ENCODE measurements at regions of chr7 and their contacts with region 1.

Region 1: GRCh38 chr7:55515569-55516279 is 56.6 kb downstream of the VOPP1 start:
- DNase-seq: peak; percentile 53
- H3K4me3 Mint-ChIP-seq: peak overlapping the region; percentile 18
- H3K27ac Mint-ChIP-seq: peak overlapping the region; percentile 74
- H3K4me1 Mint-ChIP-seq: peaks cover 82% of the 10 kb centered on the region
- H3K27me3 Mint-ChIP-seq: no peaks in the 10 kb centered on the region

Region 2: GRCh38 chr7:55309040-55309991 is 206.4 kb before region 1 on chr7:
- CTCF ChIA-PET with region 1: interaction called, 3 read pairs
- POLR2A ChIA-PET with region 1: interaction called, 8 read pairs
- intact Hi-C with region 1: loop called (anchors 1 kb)
- DNase-seq: peak; percentile 95
- H3K4me3 Mint-ChIP-seq: peak overlapping the region; percentile 16
- H3K27ac Mint-ChIP-seq: peak overlapping the region; percentile 90
- H3K4me1 Mint-ChIP-seq: peaks cover 43% of the 10 kb centered on the region
- H3K27me3 Mint-ChIP-seq: peaks cover 25% of the 10 kb centered on the region

Region 3: GRCh38 chr7:55432939-55433784 is 82.6 kb before region 1 on chr7:
- CTCF ChIA-PET with region 1: interaction called, 4 read pairs
- POLR2A ChIA-PET with region 1: no interaction called
- intact Hi-C with region 1: loop called (anchors 5 kb)
- DNase-seq: peak; percentile 32
- H3K4me3 Mint-ChIP-seq: no peak overlapping the region
- H3K27ac Mint-ChIP-seq: no peak overlapping the region
- H3K4me1 Mint-ChIP-seq: peaks cover 28% of the 10 kb centered on the region
- H3K27me3 Mint-ChIP-seq: no peaks in the 10 kb centered on the region

Region 4: GRCh38 chr7:55469271-55469681 is 46.4 kb before region 1 on chr7:
- CTCF ChIA-PET with region 1: no interaction called
- POLR2A ChIA-PET with region 1: interaction called, 4 read pairs
- intact Hi-C with region 1: loop called (anchors 1 kb)
- DNase-seq: peak; percentile 42
- H3K4me3 Mint-ChIP-seq: peak overlapping the region; percentile 5
- H3K27ac Mint-ChIP-seq: peak overlapping the region; percentile 85
- H3K4me1 Mint-ChIP-seq: peaks cover 75% of the 10 kb centered on the region
- H3K27me3 Mint-ChIP-seq: no peaks in the 10 kb centered on the region

Region 5: GRCh38 chr7:55483046-55483445 is 32.7 kb before region 1 on chr7:
- CTCF ChIA-PET with region 1: interaction called, 3 read pairs
- POLR2A ChIA-PET with region 1: no interaction called
- intact Hi-C with region 1: loop called (anchors 5 kb)
- DNase-seq: peak; percentile 9
- H3K4me3 Mint-ChIP-seq: no peak overlapping the region
- H3K27ac Mint-ChIP-seq: peak overlapping the region; percentile 52
- H3K4me1 Mint-ChIP-seq: peaks cover 82% of the 10 kb centered on the region
- H3K27me3 Mint-ChIP-seq: no peaks in the 10 kb centered on the region

Region 6: GRCh38 chr7:55838595-55838994 is 322.9 kb after region 1 on chr7:
- CTCF ChIA-PET with region 1: no interaction called
- POLR2A ChIA-PET with region 1: no interaction called
- intact Hi-C with region 1: no loop called
- DNase-seq: no peak
- H3K4me3 Mint-ChIP-seq: no peak overlapping the region
- H3K27ac Mint-ChIP-seq: no peak overlapping the region
- H3K4me1 Mint-ChIP-seq: no peaks in the 10 kb centered on the region
- H3K27me3 Mint-ChIP-seq: no peaks in the 10 kb centered on the region

Measured in activated CD4-positive, alpha-beta memory T cell treated with anti-CD3 and anti-CD28 coated beads for 36 hours (primary cell).